ENCODE measurements at regions of chr14 and their contacts with region 1.

Region 1: GRCh38 chr14:55752586-55753390 is 172.8 kb downstream of the KTN1 start:
- DNase-seq: peak; percentile 100
- ATAC-seq: peak; percentile 87
- H3K4me3 ChIP-seq: peak overlapping the region; percentile 4; the same call in 1 of the 2 replicates
- H3K27ac ChIP-seq: peak overlapping the region; percentile 44
- H3K4me1 ChIP-seq: peaks cover 44% of the 10 kb centered on the region
- H3K27me3 ChIP-seq: no peaks in the 10 kb centered on the region
- CTCF ChIP-seq: no peak

Region 2: GRCh38 chr14:55518391-55518790 is 234.4 kb before region 1 on chr14:
- CTCF ChIA-PET with region 1: no interaction called
- POLR2A ChIA-PET with region 1: no interaction called
- intact Hi-C with region 1: no loop called
- DNase-seq: no peak
- ATAC-seq: no peak
- H3K4me3 ChIP-seq: no peak overlapping the region
- H3K27ac ChIP-seq: no peak overlapping the region
- H3K4me1 ChIP-seq: peaks cover 8% of the 10 kb centered on the region; the same call in 1 of the 2 replicates
- H3K27me3 ChIP-seq: no peaks in the 10 kb centered on the region
- CTCF ChIP-seq: no peak

Region 3: DNA sequence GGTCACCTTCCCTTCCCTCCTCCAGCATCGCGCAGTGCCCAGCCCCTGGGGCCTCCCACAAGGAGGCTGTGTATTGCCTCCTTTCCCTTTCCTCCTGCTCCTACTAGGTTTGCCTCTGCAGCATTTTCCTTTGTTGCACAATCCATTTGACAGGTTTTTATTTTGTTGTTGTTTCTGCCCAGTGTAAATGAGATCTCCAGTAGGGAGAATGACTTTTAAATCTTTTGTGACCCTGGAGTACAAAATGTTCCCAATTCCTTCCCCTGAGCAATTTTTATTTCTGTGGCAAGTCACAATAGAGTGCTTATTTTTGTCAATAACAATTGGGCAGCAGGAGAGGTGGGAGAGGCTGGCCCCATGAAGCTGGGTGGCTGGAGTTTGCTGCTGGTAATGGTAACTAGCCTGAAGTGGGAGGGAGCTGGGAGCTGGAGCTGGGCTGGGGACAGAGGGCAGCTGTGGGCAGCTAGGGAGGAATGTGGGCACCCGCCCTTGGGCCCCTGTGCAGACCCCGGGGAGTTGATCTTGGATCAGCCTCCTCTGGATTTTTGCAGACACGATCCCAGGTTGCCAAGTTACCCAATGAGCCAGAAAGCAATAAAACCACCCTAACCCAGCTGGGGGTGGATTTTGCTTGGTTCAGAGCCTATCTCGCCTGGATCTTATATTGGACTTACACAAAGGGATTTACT is 12.7 kb before region 1 on chr14:
- CTCF ChIA-PET with region 1: no interaction called
- POLR2A ChIA-PET with region 1: no interaction called
- intact Hi-C with region 1: loop called (anchors 1 kb)
- DNase-seq: peak; percentile 71
- ATAC-seq: peak; percentile 75
- H3K4me3 ChIP-seq: no peak overlapping the region
- H3K27ac ChIP-seq: no peak overlapping the region
- H3K4me1 ChIP-seq: peaks cover 15% of the 10 kb centered on the region
- H3K27me3 ChIP-seq: no peaks in the 10 kb centered on the region
- CTCF ChIP-seq: no peak

Region 4: GRCh38 chr14:55780156-55780946 is 27.6 kb after region 1 on chr14:
- CTCF ChIA-PET with region 1: no interaction called
- POLR2A ChIA-PET with region 1: no interaction called
- intact Hi-C with region 1: loop called (anchors 2 kb)
- DNase-seq: peak; percentile 89
- ATAC-seq: peak; percentile 73
- H3K4me3 ChIP-seq: no peak overlapping the region
- H3K27ac ChIP-seq: no peak overlapping the region
- H3K4me1 ChIP-seq: peaks cover 12% of the 10 kb centered on the region
- H3K27me3 ChIP-seq: no peaks in the 10 kb centered on the region
- CTCF ChIP-seq: no peak

Region 5: GRCh38 chr14:55794655-55795595 is 42.1 kb after region 1 on chr14:
- CTCF ChIA-PET with region 1: no interaction called
- POLR2A ChIA-PET with region 1: no interaction called
- intact Hi-C with region 1: loop called (anchors 2 kb)
- DNase-seq: peak; percentile 92
- ATAC-seq: peak; percentile 70
- H3K4me3 ChIP-seq: no peak overlapping the region
- H3K27ac ChIP-seq: peak overlapping the region; percentile 30
- H3K4me1 ChIP-seq: peaks cover 36% of the 10 kb centered on the region
- H3K27me3 ChIP-seq: no peaks in the 10 kb centered on the region
- CTCF ChIP-seq: no peak

Region 6: DNA sequence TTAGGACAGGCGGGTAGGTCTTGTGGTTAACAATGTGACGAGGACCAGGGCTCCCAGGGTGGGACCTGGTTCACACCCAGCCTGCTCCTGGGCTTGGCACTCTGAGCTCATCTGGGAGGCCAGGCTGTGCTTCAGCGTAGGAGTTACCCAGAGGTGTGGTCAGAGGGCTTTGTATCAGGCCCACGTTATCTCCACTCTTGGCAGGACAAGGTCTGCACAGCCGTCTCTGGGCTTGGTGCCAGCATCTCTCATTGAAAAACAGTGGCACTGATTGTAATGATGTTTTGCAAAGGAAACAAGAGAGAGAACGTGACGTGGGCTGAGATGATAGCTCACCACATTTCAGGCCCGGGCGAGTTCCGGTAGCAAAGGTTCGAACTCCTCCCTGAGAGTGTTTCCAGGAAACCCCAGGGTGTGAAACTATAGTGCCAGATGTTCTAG is 54.3 kb after region 1 on chr14:
- CTCF ChIA-PET with region 1: no interaction called
- POLR2A ChIA-PET with region 1: no interaction called
- intact Hi-C with region 1: loop called (anchors 2 kb)
- DNase-seq: peak; percentile 87
- ATAC-seq: peak; percentile 42
- H3K4me3 ChIP-seq: no peak overlapping the region
- H3K27ac ChIP-seq: peak overlapping the region; percentile 60
- H3K4me1 ChIP-seq: peaks cover 40% of the 10 kb centered on the region
- H3K27me3 ChIP-seq: no peaks in the 10 kb centered on the region
- CTCF ChIP-seq: no peak

Region 7: GRCh38 chr14:55846826-55847446 is 94.1 kb after region 1 on chr14:
- CTCF ChIA-PET with region 1: interaction called, 3 read pairs
- POLR2A ChIA-PET with region 1: no interaction called
- intact Hi-C with region 1: loop called (anchors 1 kb)
- DNase-seq: peak; percentile 55
- ATAC-seq: peak; percentile 40
- H3K4me3 ChIP-seq: no peak overlapping the region
- H3K27ac ChIP-seq: peak overlapping the region; percentile 56
- H3K4me1 ChIP-seq: peaks cover 32% of the 10 kb centered on the region
- H3K27me3 ChIP-seq: no peaks in the 10 kb centered on the region
- CTCF ChIP-seq: no peak

Region 8: DNA sequence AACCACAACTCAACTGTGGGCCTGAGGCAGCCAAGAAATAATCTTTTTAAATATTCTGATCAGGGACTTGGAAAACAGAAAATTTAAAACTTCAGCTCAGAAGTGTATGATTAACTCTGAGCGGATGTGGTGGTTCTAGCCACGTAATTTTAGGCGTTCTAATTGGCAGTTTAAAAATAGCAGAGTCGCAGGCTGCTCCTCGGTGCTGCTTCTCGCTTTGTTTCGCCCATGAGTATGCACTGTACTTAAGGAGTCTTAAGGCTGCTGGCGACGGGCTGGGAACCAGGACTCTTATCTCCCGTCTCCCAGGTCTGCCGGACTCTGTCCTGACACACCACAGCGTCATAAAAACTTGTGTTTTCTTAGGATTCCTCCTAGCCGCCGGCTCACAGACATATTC is 252.0 kb after region 1 on chr14:
- CTCF ChIA-PET with region 1: no interaction called
- POLR2A ChIA-PET with region 1: no interaction called
- intact Hi-C with region 1: no loop called
- DNase-seq: no peak
- ATAC-seq: no peak
- H3K4me3 ChIP-seq: no peak overlapping the region
- H3K27ac ChIP-seq: no peak overlapping the region
- H3K4me1 ChIP-seq: no peaks in the 10 kb centered on the region
- H3K27me3 ChIP-seq: peaks cover 8% of the 10 kb centered on the region; the same call in 1 of the 2 replicates
- CTCF ChIP-seq: no peak